Tibial artery (tissue), 4 donors: ENCODE measurements at regions of chr9 and their contacts with region 1.

Region 1: DNA sequence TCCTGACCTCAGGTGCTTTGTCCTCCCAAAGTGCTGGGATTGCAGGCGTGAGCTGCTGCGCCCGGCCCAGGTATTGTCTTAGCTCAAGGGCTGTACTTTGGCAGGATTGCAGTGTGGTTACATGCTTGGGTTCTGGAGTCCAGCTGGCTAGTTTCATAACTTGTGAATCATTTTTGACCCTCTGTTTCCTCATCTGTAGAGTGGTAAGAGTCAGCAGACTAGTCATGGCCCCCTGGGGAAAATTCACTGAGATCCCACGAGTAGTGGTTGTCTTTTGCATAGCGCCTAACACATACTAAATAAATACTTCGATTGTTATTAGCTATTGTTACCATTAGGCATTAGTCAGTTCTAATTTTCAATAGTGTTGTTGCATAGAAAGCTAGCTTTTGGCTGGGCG is 14.3 kb downstream of the PTPA start:
- DNase-seq: no peak
- H3K4me3 ChIP-seq: no peak overlapping the region
- H3K27ac ChIP-seq: no peak overlapping the region
- H3K4me1 ChIP-seq: peaks cover 0 to 4% (median 0%) of the 10 kb centered on the region in 4 donors
- H3K27me3 ChIP-seq: no peaks in the 10 kb centered on the region
- CTCF ChIP-seq: no peak

Region 2: DNA sequence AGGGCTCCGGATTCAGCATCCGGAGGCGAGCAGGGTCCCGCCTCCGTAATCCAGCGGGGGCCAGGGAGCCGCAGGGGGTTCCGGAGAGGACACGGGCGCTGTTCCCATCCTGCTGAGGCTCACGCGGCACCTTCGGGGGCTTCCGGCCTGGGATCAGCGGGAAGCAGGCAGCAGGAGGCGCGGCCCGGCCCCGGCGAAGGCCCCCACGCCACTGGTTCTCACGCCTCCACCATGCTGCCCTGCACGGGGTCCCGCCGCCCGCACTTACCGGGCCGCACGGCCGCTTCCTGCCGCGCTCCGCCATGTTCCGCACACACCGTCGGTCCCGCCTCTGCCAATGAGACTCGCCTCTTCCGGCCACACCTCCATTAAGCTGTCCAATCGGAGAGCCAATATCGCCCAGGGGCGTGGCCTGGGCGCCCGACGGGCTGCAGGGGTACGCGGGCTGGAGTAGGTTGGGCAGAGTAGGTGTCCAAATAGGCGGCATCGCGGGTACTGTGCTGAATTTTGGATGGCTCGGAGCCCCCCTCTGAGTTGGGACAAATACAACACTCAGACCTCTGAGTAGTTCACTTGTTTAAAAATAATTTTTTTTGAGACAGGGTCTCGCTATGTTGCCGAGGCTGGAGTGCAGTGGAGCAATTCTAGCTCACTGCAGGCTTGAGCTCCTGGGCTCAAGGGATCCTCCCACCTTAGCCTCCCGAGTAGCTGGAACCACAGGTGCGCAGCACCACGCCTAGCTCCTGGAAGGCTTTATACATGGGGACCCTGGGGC is 295.8 kb before region 1 on chr9 and contains the start of gene SPOUT1:
- intact Hi-C with region 1: no loop called
- DNase-seq: peak; percentile 95 to 96
- H3K4me3 ChIP-seq: peak within 1 kb of the TSS; percentile 81 to 96
- H3K27ac ChIP-seq: peak within 1 kb of the TSS; percentile 74 to 92
- H3K4me1 ChIP-seq: peaks cover 0 to 17% (median 15%) of the 10 kb centered on the region in 4 donors
- H3K27me3 ChIP-seq: no peaks in the 10 kb centered on the region
- CTCF ChIP-seq: no peak

Region 3: GRCh38 chr9:129796029-129796910 is 670.8 kb after region 1 on chr9:
- intact Hi-C with region 1: loop called (anchors 10 kb)
- DNase-seq: no peak
- H3K4me3 ChIP-seq: no peak overlapping the region
- H3K27ac ChIP-seq: no peak overlapping the region
- H3K4me1 ChIP-seq: no peaks in the 10 kb centered on the region
- H3K27me3 ChIP-seq: peaks cover 0 to 20% of the 10 kb centered on the region in 2 donors
- CTCF ChIP-seq: no peak

Region 4: DNA sequence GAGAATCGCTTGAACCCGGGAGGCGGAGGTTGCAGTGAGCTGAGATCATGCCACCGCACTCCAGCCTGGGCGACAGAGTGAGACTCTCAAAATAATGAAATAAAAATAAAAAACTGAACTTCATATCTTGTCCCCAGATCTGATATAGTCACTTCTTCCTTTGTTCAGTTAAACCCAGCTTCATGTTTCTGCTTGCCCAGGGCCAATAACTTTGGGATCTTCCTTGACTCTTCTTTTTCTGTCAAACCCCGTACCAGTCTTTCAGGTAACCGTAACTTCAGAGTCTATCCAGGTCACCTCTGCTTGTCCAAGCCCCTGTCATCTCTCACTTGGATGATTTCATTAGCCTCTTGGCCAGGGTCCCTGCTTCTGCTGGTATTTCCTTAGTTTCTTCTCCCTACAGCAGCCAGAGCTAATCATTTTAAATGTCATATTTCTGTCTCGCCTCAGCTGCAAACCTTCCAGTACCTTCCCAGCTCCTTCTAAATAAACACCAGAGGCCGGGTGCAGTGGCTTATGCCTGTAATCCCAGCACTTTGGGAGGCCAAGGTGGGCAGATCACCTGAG is 1689.8 kb after region 1 on chr9:
- intact Hi-C with region 1: no loop called
- DNase-seq: no peak
- H3K4me3 ChIP-seq: no peak overlapping the region
- H3K27ac ChIP-seq: no peak overlapping the region
- H3K4me1 ChIP-seq: peaks cover 0 to 7% (median 0%) of the 10 kb centered on the region in 4 donors
- H3K27me3 ChIP-seq: no peaks in the 10 kb centered on the region
- CTCF ChIP-seq: no peak